Heart right ventricle (tissue), 16 donors: ENCODE measurements at regions of chr17 and their contacts with region 1.

Region 1: GRCh38 chr17:70499067-70499786 is 329.9 kb downstream of the KCNJ2 start:
- DNase-seq: no peak
- ATAC-seq: peak in 2 of 8 donors; percentile 42 to 66
- H3K4me3 ChIP-seq: no peak overlapping the region
- H3K27ac ChIP-seq: peak overlapping the region in 2 of 10 donors; percentile 15 to 51
- H3K4me1 ChIP-seq: peaks cover 0 to 22% (median 6%) of the 10 kb centered on the region in 9 donors
- H3K27me3 ChIP-seq: no peaks in the 10 kb centered on the region
- CTCF ChIP-seq: no peak

Region 2: DNA sequence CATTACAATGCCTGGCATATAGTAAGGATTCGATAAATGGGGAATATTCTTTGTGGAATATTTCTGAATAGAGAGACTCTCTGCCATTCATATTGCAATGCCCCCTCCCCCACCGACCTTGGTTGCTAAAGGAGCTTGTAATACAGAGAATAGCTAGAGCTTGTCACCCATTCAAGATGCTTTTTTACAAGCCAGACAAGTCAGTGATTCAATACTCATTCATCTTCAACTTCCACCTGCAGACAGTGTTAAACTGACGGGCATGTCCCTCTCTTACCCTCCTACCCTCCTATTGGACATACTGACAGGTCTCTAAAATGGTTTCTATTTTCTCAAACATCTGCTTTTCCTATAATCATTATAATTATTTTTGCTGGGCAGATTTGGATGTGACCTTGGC is 72.5 kb before region 1 on chr17:
- intact Hi-C with region 1: no loop called
- DNase-seq: no peak
- ATAC-seq: no peak
- H3K4me3 ChIP-seq: no peak overlapping the region
- H3K27ac ChIP-seq: no peak overlapping the region
- H3K4me1 ChIP-seq: peaks cover 0 to 12% (median 7%) of the 10 kb centered on the region in 9 donors
- H3K27me3 ChIP-seq: no peaks in the 10 kb centered on the region
- CTCF ChIP-seq: no peak

Region 3: DNA sequence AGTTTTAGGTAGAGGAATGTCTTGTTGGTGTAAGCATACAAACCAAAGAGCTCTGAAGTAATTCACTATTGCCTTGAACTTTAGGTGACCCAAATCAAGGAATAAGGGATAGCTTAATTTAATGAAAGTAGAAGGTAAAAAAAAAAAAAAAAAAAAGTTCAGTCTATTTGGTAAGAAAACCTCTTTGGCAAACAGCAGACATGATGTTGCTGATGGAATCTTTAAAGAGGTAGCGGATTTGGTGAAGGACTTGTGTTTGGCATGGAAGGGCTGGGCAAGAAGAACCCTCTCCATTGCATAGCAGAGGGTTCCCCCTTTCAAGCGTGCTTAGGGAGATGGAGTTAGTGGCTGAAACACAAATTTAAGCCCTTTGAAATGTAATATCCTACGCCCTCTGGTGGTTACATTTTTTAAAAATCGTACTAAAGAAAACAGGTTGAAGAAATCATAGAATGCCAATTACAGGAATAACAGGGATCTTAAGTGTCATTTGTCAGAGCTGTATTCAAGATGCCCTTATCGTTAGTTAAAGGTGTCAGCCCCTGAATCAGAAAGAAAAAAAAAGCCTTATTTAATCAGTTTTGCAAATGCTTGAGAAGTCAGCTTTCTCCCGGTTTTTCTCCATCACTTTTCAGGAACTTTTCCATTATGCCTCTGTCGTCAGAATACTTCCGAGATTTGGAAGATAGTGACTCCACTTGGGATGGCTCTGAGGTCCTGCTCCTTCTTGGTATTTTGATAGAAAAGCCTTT is 53.2 kb after region 1 on chr17:
- intact Hi-C with region 1: no loop called
- DNase-seq: peak in 1 of 2 donors; percentile 8
- ATAC-seq: peak; percentile 55 to 83 (median 66)
- H3K4me3 ChIP-seq: peak overlapping the region in 3 of 10 donors; percentile 8 to 22 (median 20)
- H3K27ac ChIP-seq: peak overlapping the region in 2 of 10 donors; percentile 10 to 29
- H3K4me1 ChIP-seq: peaks cover 0 to 4% (median 0%) of the 10 kb centered on the region in 9 donors
- H3K27me3 ChIP-seq: no peaks in the 10 kb centered on the region
- CTCF ChIP-seq: peak; percentile 34 to 72 (median 60)

Region 4: DNA sequence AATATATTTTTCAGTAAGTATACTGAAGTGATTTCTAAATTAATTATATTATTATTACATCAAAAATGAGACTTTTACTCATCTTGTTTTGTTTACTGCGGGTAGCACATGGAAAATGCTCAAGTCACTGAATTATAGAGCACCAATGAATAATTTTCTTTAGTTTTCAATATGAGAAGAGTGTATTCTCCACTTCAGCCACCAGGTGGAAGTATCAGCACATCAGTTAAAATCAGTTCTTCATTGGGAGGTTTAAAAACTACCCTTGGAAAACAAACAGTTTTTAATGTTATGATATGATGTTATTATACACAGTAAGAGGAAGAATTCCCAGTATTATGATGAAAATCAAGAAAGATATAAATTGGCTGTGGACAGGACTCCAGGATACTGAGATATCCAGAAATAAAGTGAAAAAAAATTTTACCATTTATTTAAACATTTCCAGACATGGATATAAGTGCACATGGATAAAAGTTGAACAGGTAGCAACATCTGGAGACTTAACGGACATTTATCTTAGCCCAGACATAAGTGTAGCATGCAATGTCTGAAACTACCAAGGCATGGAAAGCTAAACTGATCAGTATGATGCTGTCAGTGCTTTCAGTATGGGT is 137.4 kb after region 1 on chr17:
- intact Hi-C with region 1: no loop called
- DNase-seq: peak in 1 of 2 donors; percentile 12
- ATAC-seq: no peak
- H3K4me3 ChIP-seq: no peak overlapping the region
- H3K27ac ChIP-seq: no peak overlapping the region
- H3K4me1 ChIP-seq: no peaks in the 10 kb centered on the region
- H3K27me3 ChIP-seq: peaks cover 0 to 9% (median 0%) of the 10 kb centered on the region in 7 donors
- CTCF ChIP-seq: peak; percentile 65 to 85 (median 79)

Region 5: DNA sequence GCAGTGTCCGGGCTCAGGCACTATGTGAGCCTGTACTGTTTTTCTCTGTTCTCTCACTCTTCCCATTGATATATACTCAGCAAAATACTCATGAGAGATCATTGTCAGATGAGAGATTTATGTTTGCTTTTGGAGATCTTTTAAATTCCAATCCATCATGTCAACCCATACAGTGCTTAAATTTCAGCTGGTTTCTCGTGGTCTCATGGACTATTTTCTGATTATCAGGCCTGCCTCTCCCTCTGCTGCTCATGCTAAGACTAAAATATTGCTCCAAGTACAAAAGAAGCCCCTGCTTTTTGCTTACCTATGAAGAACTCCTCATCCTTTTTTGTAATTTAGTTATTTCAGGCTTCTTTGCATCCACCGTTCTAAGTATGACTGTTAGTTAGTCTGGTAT is 217.3 kb after region 1 on chr17:
- intact Hi-C with region 1: loop called in 1 of 10 experiments (anchors 10 kb)
- DNase-seq: no peak
- ATAC-seq: no peak
- H3K4me3 ChIP-seq: no peak overlapping the region
- H3K27ac ChIP-seq: no peak overlapping the region
- H3K4me1 ChIP-seq: no peaks in the 10 kb centered on the region
- H3K27me3 ChIP-seq: no peaks in the 10 kb centered on the region
- CTCF ChIP-seq: no peak